HCT116 (cell line): ENCODE measurements at regions of chr12 and their contacts with region 1.

Region 1: DNA sequence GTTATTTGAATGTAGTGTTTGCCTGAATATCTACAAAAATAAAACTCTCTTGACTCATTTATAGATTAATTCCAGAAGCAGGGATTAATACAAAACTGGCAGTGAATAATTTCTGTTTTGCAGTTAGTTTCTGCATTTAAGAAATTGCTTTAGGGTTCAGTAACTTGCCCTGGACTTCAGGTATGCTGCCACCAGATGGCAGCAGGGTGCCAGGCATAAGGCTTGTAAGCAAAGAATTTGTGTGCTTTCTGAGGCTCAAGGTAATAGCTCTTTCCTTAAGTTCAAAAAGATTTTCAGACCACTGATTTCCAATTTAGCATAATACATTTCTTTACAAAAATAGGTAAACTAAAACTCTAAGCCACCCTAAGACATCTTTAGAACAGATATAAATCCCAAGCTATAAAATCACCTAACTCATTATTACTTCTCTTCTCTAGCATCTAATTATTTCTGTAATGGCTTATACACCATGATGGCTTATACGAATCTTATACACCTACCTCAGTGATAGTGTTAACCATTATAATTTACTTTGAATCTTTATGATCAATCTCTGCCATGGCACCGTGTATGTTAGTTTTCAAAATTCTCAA is 398.3 kb downstream of the APAF1 start:
- DNase-seq: peak; percentile 51
- ATAC-seq: peak; percentile 74; the same call in 1 of the 2 replicates
- H3K4me3 ChIP-seq: no peak overlapping the region
- H3K27ac ChIP-seq: no peak overlapping the region
- H3K4me1 ChIP-seq: no peaks in the 10 kb centered on the region
- H3K27me3 ChIP-seq: peaks cover under 1% of the 10 kb centered on the region; the same call in 1 of the 2 replicates
- CTCF ChIP-seq: peak; percentile 68 to 90 (median 89); a peak in 5 of 6 replicates
- POLR2A ChIP-seq: no peak
- RAD21 ChIP-seq: peak; percentile 85

Region 2: DNA sequence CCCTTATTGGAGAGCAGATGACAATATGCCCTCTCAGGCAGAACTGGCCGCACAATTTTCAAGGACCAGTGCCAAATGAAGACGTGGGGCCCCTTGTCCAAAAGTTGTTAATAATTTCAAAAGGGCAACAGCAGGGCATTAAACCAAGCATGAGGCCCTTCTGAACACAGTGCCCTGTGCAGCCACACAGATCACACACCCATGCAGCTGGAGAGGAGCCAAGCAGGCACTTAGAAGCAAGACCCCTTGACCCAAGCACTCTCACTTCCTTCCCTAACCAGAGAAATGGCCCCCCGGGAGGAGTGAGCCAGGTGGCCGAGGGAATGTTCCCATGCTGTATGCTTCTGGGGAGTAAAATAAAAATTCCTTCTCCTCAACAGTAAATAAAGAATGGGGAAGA is 642.0 kb before region 1 on chr12:
- CTCF ChIA-PET with region 1: no interaction called
- POLR2A ChIA-PET with region 1: no interaction called
- RAD21 ChIA-PET with region 1: no interaction called
- intact Hi-C with region 1: no loop called
- DNase-seq: no peak
- ATAC-seq: peak; percentile 16
- H3K4me3 ChIP-seq: peak overlapping the region; percentile 16 to 20
- H3K27ac ChIP-seq: peak overlapping the region; percentile 88
- H3K4me1 ChIP-seq: peaks cover 69 to 81% of the 10 kb centered on the region in 2 experiments
- H3K27me3 ChIP-seq: no peaks in the 10 kb centered on the region
- CTCF ChIP-seq: no peak
- POLR2A ChIP-seq: no peak
- RAD21 ChIP-seq: no peak

Region 3: DNA sequence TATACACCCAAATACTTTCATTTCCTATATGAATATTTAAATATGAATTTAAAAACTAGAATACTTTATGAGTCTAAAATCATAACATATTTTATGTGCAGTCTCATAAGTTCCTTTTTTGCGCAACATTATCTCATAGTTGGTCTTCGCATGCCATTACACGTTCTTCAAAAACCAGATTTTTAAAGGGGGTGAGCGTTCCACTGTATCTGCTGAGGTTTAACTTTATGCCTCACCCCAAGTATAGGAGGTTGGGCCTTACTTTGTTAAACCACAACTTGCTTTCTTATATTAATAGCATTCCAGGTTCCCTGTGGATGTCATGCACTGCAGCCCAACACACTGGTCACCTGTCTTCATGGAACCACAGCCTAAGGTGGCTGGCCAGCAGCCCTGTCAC is 279.8 kb before region 1 on chr12:
- CTCF ChIA-PET with region 1: no interaction called
- POLR2A ChIA-PET with region 1: no interaction called
- RAD21 ChIA-PET with region 1: no interaction called
- intact Hi-C with region 1: no loop called
- DNase-seq: no peak
- ATAC-seq: no peak
- H3K4me3 ChIP-seq: no peak overlapping the region
- H3K27ac ChIP-seq: no peak overlapping the region
- H3K4me1 ChIP-seq: no peaks in the 10 kb centered on the region
- H3K27me3 ChIP-seq: peaks cover 17% of the 10 kb centered on the region; the same call in 1 of the 2 replicates
- CTCF ChIP-seq: no peak
- POLR2A ChIP-seq: no peak
- RAD21 ChIP-seq: no peak

Region 4: DNA sequence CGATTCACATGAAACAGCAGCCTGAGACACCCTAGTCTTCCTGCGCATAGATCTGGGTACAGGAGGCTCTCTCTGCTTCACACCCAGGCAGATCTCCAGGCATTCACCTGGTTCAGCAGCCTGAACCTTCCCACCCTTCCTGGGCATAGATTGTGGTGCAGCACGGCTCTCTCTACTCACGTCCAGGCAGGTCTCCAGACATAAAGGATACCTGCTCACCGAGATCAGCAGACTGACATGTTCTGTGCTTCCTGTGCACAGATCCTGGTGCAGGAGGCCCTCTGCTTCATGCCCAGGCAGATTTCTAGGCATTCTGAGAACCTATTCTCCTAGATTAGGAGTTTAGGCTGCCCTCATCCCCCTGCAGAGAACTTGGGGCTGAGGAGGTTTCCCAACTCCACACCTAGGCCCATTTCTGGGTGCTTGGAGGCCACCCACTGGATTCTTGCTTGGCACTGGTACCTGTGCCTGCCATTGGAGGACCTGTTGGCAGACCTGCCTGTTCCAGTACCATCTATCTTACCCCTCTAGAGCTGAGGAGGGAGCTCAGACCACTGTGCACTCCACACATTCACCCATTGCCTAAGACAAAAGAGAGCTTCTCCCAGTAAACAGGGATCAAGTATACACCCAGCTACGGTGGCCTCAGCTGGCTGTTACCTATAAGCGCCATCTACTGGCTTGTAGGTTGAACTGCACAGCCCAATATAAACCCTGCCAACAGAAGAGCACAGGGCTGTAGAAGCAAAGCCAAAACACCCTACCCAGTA is 576.2 kb after region 1 on chr12:
- CTCF ChIA-PET with region 1: interaction called, 11 read pairs
- POLR2A ChIA-PET with region 1: no interaction called
- RAD21 ChIA-PET with region 1: no interaction called
- intact Hi-C with region 1: loop called (anchors 1 kb)
- DNase-seq: peak; percentile 23
- ATAC-seq: peak; percentile 92
- H3K4me3 ChIP-seq: no peak overlapping the region
- H3K27ac ChIP-seq: no peak overlapping the region
- H3K4me1 ChIP-seq: no peaks in the 10 kb centered on the region
- H3K27me3 ChIP-seq: no peaks in the 10 kb centered on the region
- CTCF ChIP-seq: peak; percentile 55 to 83 (median 80); a peak in 5 of 6 replicates
- POLR2A ChIP-seq: no peak
- RAD21 ChIP-seq: peak; percentile 68

Region 5: GRCh38 chr12:99658671-99659349 is 615.4 kb after region 1 on chr12:
- CTCF ChIA-PET with region 1: interaction called, 40 read pairs
- POLR2A ChIA-PET with region 1: no interaction called
- RAD21 ChIA-PET with region 1: interaction called, 5 read pairs
- intact Hi-C with region 1: loop called (anchors 2 kb)
- DNase-seq: peak; percentile 4
- ATAC-seq: no peak
- H3K4me3 ChIP-seq: no peak overlapping the region
- H3K27ac ChIP-seq: no peak overlapping the region
- H3K4me1 ChIP-seq: no peaks in the 10 kb centered on the region
- H3K27me3 ChIP-seq: 0 out of 2 replicates have a peak, but pooled peaks cover 12% of the 10 kb centered on the region
- CTCF ChIP-seq: peak; percentile 20 to 43 (median 30); a peak in 2 of 6 replicates
- POLR2A ChIP-seq: no peak
- RAD21 ChIP-seq: peak; percentile 56

Region 6: GRCh38 chr12:99767809-99768208 is 724.4 kb after region 1 on chr12:
- CTCF ChIA-PET with region 1: interaction called, 7 read pairs
- POLR2A ChIA-PET with region 1: no interaction called
- RAD21 ChIA-PET with region 1: no interaction called
- intact Hi-C with region 1: loop called (anchors 2 kb)
- DNase-seq: peak; percentile 7
- ATAC-seq: no peak
- H3K4me3 ChIP-seq: no peak overlapping the region
- H3K27ac ChIP-seq: no peak overlapping the region
- H3K4me1 ChIP-seq: no peaks in the 10 kb centered on the region
- H3K27me3 ChIP-seq: peaks cover 36% of the 10 kb centered on the region
- CTCF ChIP-seq: peak; percentile 30 to 57 (median 37); a peak in 4 of 6 replicates
- POLR2A ChIP-seq: no peak
- RAD21 ChIP-seq: peak; percentile 52